CD14-positive monocyte (primary cell): ENCODE measurements at regions of chr12 and their contacts with region 1.

Region 1: DNA sequence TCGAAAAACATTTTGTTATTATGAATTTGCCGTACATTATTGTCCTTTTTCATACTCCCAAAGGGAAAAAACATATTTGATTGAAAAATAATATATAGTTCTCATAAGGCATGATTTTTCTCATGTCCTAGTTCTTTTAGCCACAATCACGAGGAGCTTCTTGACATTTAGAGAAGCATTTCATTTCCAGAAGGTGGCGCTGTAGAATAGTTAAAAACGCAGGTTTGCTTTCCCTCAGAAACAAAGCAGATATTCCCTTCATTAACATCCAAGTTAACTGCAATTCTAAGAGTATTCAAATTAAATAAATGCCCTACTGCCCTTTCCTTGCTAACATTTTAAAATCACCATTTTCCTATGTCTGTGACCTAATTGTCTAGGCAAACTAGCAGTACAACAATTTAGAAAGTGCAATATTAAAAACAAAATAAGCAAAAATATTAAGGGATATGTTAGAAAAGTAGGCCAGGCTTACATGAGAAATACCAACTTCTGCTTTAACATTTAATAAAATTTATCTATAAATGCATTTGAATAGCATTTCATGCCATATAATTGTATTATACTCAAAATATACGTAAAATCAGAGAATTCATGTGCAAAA is 10.9 kb upstream of the PIK3C2G start:
- DNase-seq: peak in 2 of 3 donors; percentile 10 to 15
- H3K4me3 ChIP-seq: no peak overlapping the region
- H3K4me3 Mint-ChIP-seq: no peak overlapping the region
- H3K27ac ChIP-seq: no peak overlapping the region
- H3K27ac Mint-ChIP-seq: no peak overlapping the region
- H3K4me1 ChIP-seq: no peaks in the 10 kb centered on the region
- H3K4me1 Mint-ChIP-seq: no peaks in the 10 kb centered on the region
- H3K27me3 ChIP-seq: no peaks in the 10 kb centered on the region
- H3K27me3 Mint-ChIP-seq: no peaks in the 10 kb centered on the region
- CTCF ChIP-seq: peak; percentile 74

Region 2: DNA sequence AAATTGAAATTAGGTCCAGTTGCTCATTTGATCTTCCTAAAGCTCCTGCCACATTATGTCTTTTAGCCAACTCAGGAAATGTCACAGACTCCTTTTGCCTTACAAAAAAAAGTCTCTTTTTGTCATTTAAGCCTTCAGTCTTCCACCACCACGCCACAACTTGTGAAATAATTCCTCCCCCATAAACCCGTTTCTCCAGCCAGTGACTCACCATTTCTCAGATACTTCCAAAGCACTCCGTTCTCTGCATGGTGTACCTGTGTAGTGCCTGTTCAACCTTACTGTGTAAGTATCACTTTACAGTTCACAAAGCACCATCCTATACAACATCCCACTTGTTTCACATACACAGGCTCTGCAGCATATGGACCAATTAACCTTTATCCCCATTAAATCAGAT is 1049.3 kb after region 1 on chr12:
- intact Hi-C with region 1: loop called in 1 of 2 experiments (anchors 10 kb)
- DNase-seq: no peak
- H3K4me3 ChIP-seq: no peak overlapping the region
- H3K4me3 Mint-ChIP-seq: no peak overlapping the region
- H3K27ac ChIP-seq: no peak overlapping the region
- H3K27ac Mint-ChIP-seq: no peak overlapping the region
- H3K4me1 ChIP-seq: no peaks in the 10 kb centered on the region
- H3K4me1 Mint-ChIP-seq: no peaks in the 10 kb centered on the region
- H3K27me3 ChIP-seq: no peaks in the 10 kb centered on the region
- H3K27me3 Mint-ChIP-seq: peaks cover 0 to 2% (median 0%) of the 10 kb centered on the region in 3 donors
- CTCF ChIP-seq: no peak